HepG2 (cell line): ENCODE measurements at regions of chr15 and their contacts with region 1.

Region 1: DNA sequence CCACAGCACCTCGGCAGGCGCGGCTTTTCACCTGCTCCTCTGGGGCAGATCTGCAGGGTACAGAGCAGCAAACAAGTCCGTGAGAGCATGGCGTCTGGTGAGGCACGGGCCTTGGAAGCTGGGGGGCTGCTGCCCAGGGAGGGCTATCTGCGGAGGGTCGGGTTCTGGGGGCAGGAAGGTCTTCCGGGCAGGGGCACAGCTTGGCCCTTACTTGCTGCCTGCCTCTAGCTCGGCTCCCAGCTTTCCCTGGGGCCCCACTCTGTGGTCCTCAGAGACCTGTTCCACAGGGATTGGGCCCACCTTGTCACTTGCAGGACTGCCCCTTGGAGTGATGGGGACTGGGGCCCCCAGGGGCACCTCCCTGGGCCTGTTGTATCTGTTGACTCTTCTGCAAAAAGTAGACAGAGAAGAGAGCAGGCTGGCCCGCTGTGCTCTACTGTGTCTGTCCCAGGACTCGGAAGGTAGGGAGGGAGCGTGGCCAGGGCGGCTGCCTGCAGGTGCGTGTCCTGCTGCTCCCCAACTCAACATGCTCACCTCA is 84.1 kb downstream of the TBC1D2B start:
- DNase-seq: no peak
- ATAC-seq: no peak
- H3K4me3 ChIP-seq: no peak overlapping the region
- H3K27ac ChIP-seq: no peak overlapping the region
- H3K4me1 ChIP-seq: peaks cover 28% of the 10 kb centered on the region
- H3K27me3 ChIP-seq: 0 out of 5 replicates have a peak, but pooled peaks cover 2 to 4% of the 10 kb centered on the region in 2 experiments
- CTCF ChIP-seq: no peak
- EP300 ChIP-seq: no peak
- POLR2A ChIP-seq: no peak
- RAD21 ChIP-seq: no peak

Region 2: DNA sequence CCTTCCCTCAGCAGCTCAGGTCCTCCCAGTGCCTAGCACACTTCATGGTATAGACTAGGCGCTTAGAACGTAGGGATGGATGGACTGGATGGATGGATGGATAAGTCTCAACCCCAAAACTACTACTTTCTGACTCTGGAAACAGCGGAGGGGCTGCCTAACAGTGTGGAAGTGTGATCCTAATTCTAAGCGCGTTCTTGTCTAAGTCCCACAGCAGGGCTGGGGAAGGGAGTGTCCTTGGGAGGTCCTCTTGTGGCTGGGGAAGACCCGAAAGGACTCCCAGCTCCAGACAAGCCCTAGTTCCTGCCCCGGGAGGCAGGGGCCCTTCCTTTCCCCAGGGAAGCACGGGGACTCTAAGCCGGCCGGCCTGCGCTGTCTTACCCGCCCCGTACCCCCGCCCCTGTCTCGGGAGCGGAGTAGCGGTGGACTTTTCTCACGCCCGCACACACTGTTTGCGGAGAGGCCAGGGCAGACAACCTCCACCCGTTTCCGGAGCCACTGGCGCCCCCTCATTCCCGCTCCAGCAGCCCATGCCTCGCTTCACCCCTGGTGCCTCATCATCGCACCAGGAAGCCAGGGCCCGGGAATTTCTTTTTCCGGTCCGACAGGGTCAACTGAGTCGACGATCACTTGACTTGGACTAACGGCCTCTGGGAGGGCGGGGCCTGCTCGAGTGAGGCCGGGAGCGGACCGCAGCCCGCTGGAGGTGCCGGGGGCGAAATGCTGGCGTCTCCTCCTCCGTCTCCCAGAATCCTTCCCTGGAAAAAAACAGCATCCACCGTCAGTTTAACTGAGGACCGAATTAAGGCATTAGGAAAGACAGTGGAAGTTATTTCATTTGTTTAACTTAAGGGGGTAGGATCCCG is 49.2 kb before region 1 on chr15:
- CTCF ChIA-PET with region 1: no interaction called
- POLR2A ChIA-PET with region 1: no interaction called
- in situ Hi-C with region 1: no loop called
- intact Hi-C with region 1: no loop called
- DNase-seq: peak; percentile 88
- ATAC-seq: peak; percentile 62
- H3K4me3 ChIP-seq: peak overlapping the region in 2 of 3 experiments; percentile 50 to 60; a peak in 4 of 6 replicates
- H3K27ac ChIP-seq: peak overlapping the region; percentile 95
- H3K4me1 ChIP-seq: peaks cover 47% of the 10 kb centered on the region
- H3K27me3 ChIP-seq: no peaks in the 10 kb centered on the region
- CTCF ChIP-seq: peak; percentile 51
- EP300 ChIP-seq: peak in 1 of 2 experiments; percentile 59; a peak in 2 of 4 replicates
- POLR2A ChIP-seq: peak; percentile 40 to 46; a peak in 2 of 4 replicates
- RAD21 ChIP-seq: peak; percentile 8; the same call in 1 of the 2 replicates

Region 3: GRCh38 chr15:77966540-77967290 is 26.7 kb before region 1 on chr15:
- CTCF ChIA-PET with region 1: no interaction called
- POLR2A ChIA-PET with region 1: no interaction called
- in situ Hi-C with region 1: no loop called
- intact Hi-C with region 1: loop called (anchors 2 kb)
- DNase-seq: peak; percentile 32
- ATAC-seq: peak; percentile 86
- H3K4me3 ChIP-seq: no peak overlapping the region
- H3K27ac ChIP-seq: no peak overlapping the region
- H3K4me1 ChIP-seq: 0 out of 2 replicates have a peak, but pooled peaks cover 7% of the 10 kb centered on the region
- H3K27me3 ChIP-seq: no peaks in the 10 kb centered on the region
- CTCF ChIP-seq: peak; percentile 81
- EP300 ChIP-seq: no peak
- POLR2A ChIP-seq: no peak
- RAD21 ChIP-seq: peak; percentile 69

Region 4: DNA sequence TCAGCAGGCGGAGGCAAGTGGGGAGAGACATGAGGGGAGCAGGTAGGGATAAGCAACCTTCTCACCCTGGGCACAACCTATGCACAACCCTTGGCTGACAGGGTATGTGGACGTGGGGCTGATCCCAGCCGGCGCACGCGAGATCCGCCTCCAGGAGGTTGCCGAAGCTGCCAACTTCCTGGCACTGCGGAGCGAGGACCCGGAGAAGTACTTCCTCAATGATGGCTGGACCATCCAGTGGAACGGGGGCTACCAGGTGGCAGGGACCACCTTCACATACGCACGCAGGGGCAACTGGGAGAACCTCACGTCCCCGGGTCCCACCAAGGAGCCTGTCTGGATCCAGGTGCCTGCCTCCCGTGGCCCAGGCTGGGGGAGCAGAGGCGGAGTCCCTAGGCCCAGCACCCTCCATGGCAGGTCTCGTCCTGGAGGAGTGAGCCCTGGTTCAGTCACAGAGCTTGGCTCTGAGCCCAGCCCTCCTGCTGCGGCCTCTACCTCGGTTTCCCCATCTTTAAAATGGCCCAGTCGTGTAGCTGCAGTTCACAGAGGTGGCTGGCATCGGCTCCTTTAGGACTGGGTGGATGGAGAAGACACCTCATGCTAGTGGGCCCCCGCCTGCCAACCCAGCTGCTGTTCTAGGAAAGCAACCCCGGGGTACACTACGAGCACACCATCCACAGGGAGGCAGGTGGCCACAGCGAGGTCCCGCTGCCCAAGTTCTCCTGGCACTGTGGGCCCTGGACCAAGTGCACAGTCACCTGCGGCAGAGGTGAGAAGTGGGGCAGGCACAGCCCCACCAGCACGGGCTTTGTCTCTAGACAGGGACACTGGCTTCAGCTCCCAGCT is 11.9 kb before region 1 on chr15:
- CTCF ChIA-PET with region 1: no interaction called
- POLR2A ChIA-PET with region 1: no interaction called
- in situ Hi-C with region 1: no loop called
- intact Hi-C with region 1: no loop called
- DNase-seq: no peak
- ATAC-seq: no peak
- H3K4me3 ChIP-seq: no peak overlapping the region
- H3K27ac ChIP-seq: no peak overlapping the region
- H3K4me1 ChIP-seq: peaks cover 16% of the 10 kb centered on the region
- H3K27me3 ChIP-seq: peaks cover 0 to 2% of the 10 kb centered on the region in 2 experiments; a peak in 2 of 5 replicates
- CTCF ChIP-seq: no peak
- EP300 ChIP-seq: no peak
- POLR2A ChIP-seq: no peak
- RAD21 ChIP-seq: no peak